Activated B cell treated with CpG ODN at 0.5 μM for 24 hours (primary cell): ENCODE measurements at regions of chr11 and their contacts with region 1.

Region 1: DNA sequence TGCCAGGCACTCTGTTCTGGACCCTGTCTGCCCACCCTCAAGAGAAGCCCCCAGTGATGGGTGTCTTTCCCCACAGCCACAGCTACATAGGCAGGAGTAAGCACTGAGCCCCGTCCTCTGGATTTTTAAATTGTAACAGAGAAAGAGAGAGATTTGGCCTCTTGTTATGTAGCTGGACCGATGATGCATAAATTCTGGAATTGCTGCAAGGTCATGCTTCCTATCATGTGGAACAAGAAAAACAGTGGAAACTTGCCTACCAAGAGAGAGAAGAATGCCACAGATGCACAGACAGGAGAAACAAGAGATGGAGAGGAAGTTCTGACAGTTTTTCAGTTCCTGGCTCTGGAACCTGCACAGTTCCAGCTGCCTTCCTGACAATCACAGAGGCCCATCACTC is 150.2 kb downstream of the ETS1 start:
- DNase-seq: no peak
- ATAC-seq: no peak
- H3K4me3 Mint-ChIP-seq: no peak overlapping the region
- H3K27ac Mint-ChIP-seq: no peak overlapping the region
- H3K4me1 Mint-ChIP-seq: peaks cover 20% of the 10 kb centered on the region
- H3K27me3 Mint-ChIP-seq: no peaks in the 10 kb centered on the region
- CTCF ChIP-seq: no peak

Region 2: GRCh38 chr11:128422576-128423370 is 14.4 kb before region 1 on chr11:
- CTCF ChIA-PET with region 1: no interaction called
- POLR2A ChIA-PET with region 1: no interaction called
- intact Hi-C with region 1: loop called (anchors 2 kb)
- DNase-seq: peak; percentile 42
- ATAC-seq: peak; percentile 88
- H3K4me3 Mint-ChIP-seq: peak overlapping the region; percentile 24
- H3K27ac Mint-ChIP-seq: peak overlapping the region; percentile 65
- H3K4me1 Mint-ChIP-seq: peaks cover 28% of the 10 kb centered on the region
- H3K27me3 Mint-ChIP-seq: no peaks in the 10 kb centered on the region
- CTCF ChIP-seq: no peak

Region 3: GRCh38 chr11:128868841-128869580 is 431.9 kb after region 1 on chr11:
- CTCF ChIA-PET with region 1: no interaction called
- POLR2A ChIA-PET with region 1: no interaction called
- intact Hi-C with region 1: no loop called
- DNase-seq: no peak
- ATAC-seq: no peak
- H3K4me3 Mint-ChIP-seq: no peak overlapping the region
- H3K27ac Mint-ChIP-seq: no peak overlapping the region
- H3K4me1 Mint-ChIP-seq: no peaks in the 10 kb centered on the region
- H3K27me3 Mint-ChIP-seq: peaks cover 10% of the 10 kb centered on the region
- CTCF ChIP-seq: no peak